ENCODE measurements at regions of chr9 and their contacts with region 1.

Region 1: DNA sequence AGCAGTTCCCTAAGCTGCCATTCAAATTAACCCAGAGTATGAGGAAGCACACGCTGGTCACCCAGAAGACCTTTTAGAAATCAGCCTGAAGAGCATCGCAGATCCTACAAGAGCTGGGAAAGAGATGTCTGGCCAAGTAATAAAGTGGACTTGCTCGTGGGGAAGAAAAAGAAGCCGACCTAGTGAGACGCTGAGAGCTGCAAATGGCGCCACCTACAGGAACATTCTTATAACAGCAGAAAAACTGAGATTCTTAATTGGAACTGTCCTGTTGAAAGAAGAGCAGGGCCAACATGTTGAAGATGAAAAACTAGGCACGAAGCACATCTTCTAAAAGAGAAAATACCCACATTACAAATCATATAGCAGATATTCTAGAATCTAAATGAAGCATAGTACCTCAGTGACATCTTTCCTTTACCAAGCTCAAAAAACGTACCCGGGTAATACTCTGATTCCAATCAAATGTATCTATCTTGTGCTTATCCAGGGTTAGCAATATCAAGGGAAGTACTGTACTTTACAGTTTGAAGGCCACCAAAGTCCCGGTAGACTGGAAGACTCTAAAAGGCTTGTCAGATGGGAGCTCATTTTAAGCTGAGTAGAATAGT is 3.9 kb upstream of the GNAQ start:
- DNase-seq: peak; percentile 65
- ATAC-seq: no peak
- H3K4me3 Mint-ChIP-seq: peak overlapping the region; percentile 20
- H3K27ac Mint-ChIP-seq: no peak overlapping the region
- H3K4me1 Mint-ChIP-seq: peaks cover 26% of the 10 kb centered on the region
- H3K27me3 Mint-ChIP-seq: peaks cover 7% of the 10 kb centered on the region
- CTCF ChIP-seq: peak; percentile 74

Region 2: DNA sequence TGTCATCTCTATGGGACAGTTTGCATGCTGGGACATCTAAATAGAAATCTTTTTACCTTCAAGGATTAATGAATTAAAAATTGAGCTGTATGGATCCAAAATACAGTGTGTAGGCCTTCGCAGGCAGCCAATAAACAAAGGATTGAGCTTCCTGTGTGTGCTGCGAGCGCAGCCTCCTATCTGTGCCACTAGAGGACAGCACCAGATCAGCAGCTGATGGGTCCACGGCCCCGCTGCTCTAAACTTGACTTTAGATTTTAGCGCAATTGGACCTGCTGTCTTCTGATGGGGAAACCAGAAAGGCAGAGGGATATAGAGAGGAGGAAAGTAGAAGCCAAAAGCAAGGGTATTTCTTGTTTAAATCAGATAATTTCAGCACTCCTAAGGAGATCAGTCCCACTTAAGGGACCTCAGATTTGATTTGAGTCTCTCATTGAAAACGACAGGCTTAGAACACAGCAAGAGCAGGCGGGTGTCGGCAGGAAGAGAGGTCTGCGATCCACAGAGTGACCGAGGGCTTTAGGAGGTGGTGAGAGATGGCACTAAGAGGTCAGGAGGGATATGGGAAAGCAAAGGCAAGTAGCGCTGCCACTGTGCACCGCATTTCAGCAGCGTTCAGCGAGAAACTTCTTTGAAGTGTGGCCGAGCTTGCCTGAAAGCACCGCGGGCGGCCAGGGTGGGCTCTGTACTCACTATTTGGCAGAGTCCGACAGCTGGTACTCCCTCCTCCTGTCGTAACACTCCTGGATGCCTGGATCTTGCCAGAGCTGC is 601.6 kb before region 1 on chr9:
- CTCF ChIA-PET with region 1: interaction called, 10 read pairs
- POLR2A ChIA-PET with region 1: no interaction called
- intact Hi-C with region 1: no loop called
- DNase-seq: peak; percentile 73
- ATAC-seq: peak; percentile 92
- H3K4me3 Mint-ChIP-seq: no peak overlapping the region
- H3K27ac Mint-ChIP-seq: no peak overlapping the region
- H3K4me1 Mint-ChIP-seq: peaks cover 4% of the 10 kb centered on the region
- H3K27me3 Mint-ChIP-seq: peaks cover 1% of the 10 kb centered on the region
- CTCF ChIP-seq: peak; percentile 89

Region 3: GRCh38 chr9:77841739-77842386 is 193.6 kb before region 1 on chr9:
- CTCF ChIA-PET with region 1: interaction called, 15 read pairs
- POLR2A ChIA-PET with region 1: no interaction called
- intact Hi-C with region 1: no loop called
- DNase-seq: peak; percentile 62
- ATAC-seq: peak; percentile 89
- H3K4me3 Mint-ChIP-seq: no peak overlapping the region
- H3K27ac Mint-ChIP-seq: peak overlapping the region; percentile 64
- H3K4me1 Mint-ChIP-seq: peaks cover 28% of the 10 kb centered on the region
- H3K27me3 Mint-ChIP-seq: no peaks in the 10 kb centered on the region
- CTCF ChIP-seq: peak; percentile 63

Region 4: GRCh38 chr9:77896938-77897667 is 138.4 kb before region 1 on chr9:
- CTCF ChIA-PET with region 1: interaction called, 20 read pairs
- POLR2A ChIA-PET with region 1: interaction called, 3 read pairs
- intact Hi-C with region 1: no loop called
- DNase-seq: no peak
- ATAC-seq: no peak
- H3K4me3 Mint-ChIP-seq: no peak overlapping the region
- H3K27ac Mint-ChIP-seq: no peak overlapping the region
- H3K4me1 Mint-ChIP-seq: peaks cover 22% of the 10 kb centered on the region
- H3K27me3 Mint-ChIP-seq: no peaks in the 10 kb centered on the region
- CTCF ChIP-seq: no peak

Region 5: DNA sequence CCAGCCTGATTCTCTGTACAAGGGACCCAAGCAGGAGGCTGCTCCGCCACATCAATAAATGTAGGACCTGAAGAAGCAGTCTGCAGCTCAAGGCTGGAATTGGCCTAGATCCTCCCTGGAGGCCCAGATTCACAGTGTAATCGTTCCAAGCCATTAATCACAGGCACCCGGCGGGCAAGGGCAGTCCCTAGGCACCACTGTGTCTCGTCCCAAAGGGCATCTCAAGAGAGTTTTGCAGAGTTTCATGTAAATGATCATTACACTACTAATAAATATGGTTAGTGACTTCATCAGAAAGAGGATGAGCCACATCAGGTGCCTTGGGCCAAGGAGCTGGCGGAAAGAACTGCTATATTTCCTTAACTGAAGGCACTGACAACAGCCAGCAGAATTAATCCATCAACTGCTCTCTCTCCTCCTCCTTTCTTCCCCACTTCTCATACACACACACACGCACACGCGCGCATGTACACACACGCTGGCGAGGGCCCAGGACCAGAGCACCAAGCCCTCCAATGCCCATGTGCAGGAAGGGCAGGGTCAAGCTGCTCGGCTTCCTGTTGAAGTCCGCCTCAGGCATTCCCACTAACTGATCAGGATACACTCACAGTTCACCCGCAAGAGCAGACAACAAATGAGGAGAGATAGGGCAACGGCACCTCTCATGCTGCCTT is 37.7 kb before region 1 on chr9:
- CTCF ChIA-PET with region 1: interaction called, 13 read pairs
- POLR2A ChIA-PET with region 1: interaction called, 4 read pairs
- intact Hi-C with region 1: no loop called
- DNase-seq: no peak
- ATAC-seq: no peak
- H3K4me3 Mint-ChIP-seq: no peak overlapping the region
- H3K27ac Mint-ChIP-seq: no peak overlapping the region
- H3K4me1 Mint-ChIP-seq: peaks cover 42% of the 10 kb centered on the region
- H3K27me3 Mint-ChIP-seq: no peaks in the 10 kb centered on the region
- CTCF ChIP-seq: no peak

Region 6: GRCh38 chr9:78053627-78054026 is 18.1 kb after region 1 on chr9:
- CTCF ChIA-PET with region 1: interaction called, 28 read pairs
- POLR2A ChIA-PET with region 1: interaction called, 3 read pairs
- intact Hi-C with region 1: no loop called
- DNase-seq: no peak
- ATAC-seq: peak; percentile 49
- H3K4me3 Mint-ChIP-seq: no peak overlapping the region
- H3K27ac Mint-ChIP-seq: no peak overlapping the region
- H3K4me1 Mint-ChIP-seq: peaks cover 14% of the 10 kb centered on the region
- H3K27me3 Mint-ChIP-seq: no peaks in the 10 kb centered on the region
- CTCF ChIP-seq: no peak

Region 7: GRCh38 chr9:78121488-78121887 is 86.0 kb after region 1 on chr9:
- CTCF ChIA-PET with region 1: interaction called, 16 read pairs
- POLR2A ChIA-PET with region 1: no interaction called
- intact Hi-C with region 1: loop called (anchors 5 kb)
- DNase-seq: peak; percentile 68
- ATAC-seq: no peak
- H3K4me3 Mint-ChIP-seq: no peak overlapping the region
- H3K27ac Mint-ChIP-seq: no peak overlapping the region
- H3K4me1 Mint-ChIP-seq: peaks cover 23% of the 10 kb centered on the region
- H3K27me3 Mint-ChIP-seq: peaks cover under 1% of the 10 kb centered on the region
- CTCF ChIP-seq: peak; percentile 87